Heart left ventricle (tissue), 16 donors: ENCODE measurements at regions of chr11 and their contacts with region 1.

Region 1: DNA sequence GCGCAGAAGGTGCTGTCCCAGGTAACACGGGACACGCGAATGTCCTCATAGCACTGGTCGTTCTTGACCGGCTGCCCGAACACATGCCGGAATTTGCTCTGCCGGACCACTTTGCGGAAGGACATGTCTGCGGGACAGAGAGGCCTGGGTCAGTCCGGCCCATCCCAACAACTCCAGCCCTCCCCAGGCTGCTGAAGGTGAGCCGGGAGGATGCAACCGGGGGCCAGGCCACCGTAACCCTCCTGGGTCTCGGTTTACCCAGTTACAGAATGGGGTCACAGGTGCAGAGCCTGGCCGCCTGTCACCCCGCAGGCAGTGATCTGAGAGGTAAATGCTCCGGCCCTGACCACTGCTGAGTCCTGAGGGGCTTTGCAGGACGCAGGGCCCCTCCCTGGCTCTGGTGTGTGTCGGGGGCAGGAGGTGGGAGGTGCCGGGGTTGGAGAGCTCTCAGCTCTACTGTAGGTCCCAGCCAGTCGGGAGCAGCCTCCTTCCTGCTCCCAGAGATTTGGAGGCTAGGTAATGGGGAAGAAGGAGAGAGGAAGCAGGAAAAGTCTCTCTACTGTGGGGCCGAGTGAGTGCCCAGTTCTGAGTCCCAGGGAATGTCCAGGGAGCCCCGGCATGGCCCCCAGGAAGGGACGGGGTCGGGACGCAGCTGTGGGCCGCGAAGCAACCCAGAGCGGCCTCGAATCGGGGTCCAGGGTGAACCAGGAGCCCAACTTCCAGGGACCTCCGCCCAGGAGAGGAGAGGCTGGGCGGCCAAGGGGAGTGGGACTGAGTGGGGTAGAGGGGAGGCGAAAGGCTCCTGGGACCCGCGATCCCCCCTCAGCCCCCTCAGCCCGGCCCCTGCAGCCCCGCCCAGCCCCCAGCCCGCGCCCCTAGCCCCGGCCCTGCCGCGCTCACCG is 521 bp downstream of the CORO1B start:
- DNase-seq: peak in 1 of 5 donors; percentile 21
- ATAC-seq: peak in 1 of 4 donors; percentile 4
- H3K4me3 ChIP-seq: peak overlapping the region; percentile 62 to 97 (median 84)
- H3K27ac ChIP-seq: peak overlapping the region; percentile 83 to 99 (median 96)
- H3K4me1 ChIP-seq: peaks cover 0 to 57% (median 20%) of the 10 kb centered on the region in 12 donors
- H3K27me3 ChIP-seq: no peaks in the 10 kb centered on the region
- CTCF ChIP-seq: no peak
- POLR2A ChIP-seq: no peak

Region 2: DNA sequence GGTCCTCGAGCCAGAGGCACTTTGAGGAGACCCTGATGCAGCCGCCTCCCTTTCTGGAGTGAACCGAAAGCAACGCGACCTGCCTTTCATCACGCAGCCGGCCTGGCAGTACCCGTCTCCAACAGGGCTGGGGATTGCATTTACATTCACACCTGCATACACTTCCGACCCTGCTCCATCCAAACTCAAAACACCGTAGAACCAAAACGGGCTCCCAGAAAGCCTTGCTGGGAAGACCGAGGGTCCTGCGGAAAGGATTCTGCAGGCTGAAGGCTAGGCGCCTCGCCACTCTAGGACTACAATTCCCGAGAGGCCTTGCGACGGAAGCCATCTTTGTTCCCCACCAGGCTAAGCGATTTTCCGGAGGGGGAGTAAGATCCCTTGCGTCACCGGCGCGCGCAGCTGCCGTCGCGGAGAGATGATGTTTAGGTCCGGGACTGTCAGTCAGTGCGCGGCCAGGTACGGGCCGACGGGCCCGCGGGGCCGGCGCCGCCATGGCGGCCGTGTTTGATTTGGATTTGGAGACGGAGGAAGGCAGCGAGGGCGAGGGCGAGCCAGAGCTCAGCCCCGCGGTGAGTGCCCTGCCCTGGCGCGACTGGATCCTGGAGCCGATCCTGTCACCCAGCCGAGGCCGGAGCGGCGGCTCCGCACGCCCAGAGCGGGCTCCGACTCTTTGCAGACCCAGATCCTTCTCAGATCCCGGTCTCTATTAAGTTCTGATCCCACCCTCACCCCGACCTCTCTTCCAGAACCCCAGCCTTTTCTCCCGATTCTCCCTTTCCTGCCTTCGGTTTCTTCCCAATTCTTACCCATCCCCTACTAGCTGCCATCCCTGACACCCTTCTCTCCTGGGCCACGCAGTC is 14.5 kb before region 1 on chr11 and contains the start of gene RPS6KB2:
- intact Hi-C with region 1: loop called in 2 of 10 experiments (anchors 1 kb)
- DNase-seq: peak; percentile 98 to 99 (median 99)
- ATAC-seq: peak; percentile 90 to 96 (median 94)
- H3K4me3 ChIP-seq: peak within 1 kb of the TSS; percentile 58 to 94 (median 80)
- H3K27ac ChIP-seq: peak within 1 kb of the TSS; percentile 76 to 96 (median 88)
- H3K4me1 ChIP-seq: peaks cover 7 to 23% (median 14%) of the 10 kb centered on the region in 12 donors
- H3K27me3 ChIP-seq: no peaks in the 10 kb centered on the region
- CTCF ChIP-seq: peak in 1 of 12 donors; percentile 15
- POLR2A ChIP-seq: peak; percentile 54 to 93
- total RNA-seq, gene RPS6KB2: 19.3 to 32.8 (median 25.2) TPM

Region 3: DNA sequence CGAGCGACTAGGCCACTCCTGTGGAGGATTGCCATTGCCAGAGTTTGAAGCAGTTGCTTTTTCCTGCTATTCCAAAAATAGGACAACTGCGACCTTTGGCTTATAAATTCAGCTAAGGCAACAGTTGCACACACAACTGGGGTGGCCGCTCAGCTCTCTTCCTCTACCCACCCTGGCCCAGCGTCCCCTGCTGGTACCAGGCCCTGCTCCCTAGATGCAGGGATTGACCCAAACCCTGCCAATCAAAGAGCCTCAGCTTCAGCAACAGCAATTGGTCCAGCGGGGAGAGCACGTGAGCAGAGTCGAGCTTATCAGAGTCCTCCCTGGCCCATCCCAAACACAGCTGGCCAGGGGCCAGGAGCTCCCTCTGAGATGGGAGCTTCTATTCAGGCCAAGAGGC is 102.5 kb after region 1 on chr11:
- intact Hi-C with region 1: no loop called
- DNase-seq: peak; percentile 65 to 87 (median 71)
- ATAC-seq: peak; percentile 86 to 93 (median 91)
- H3K4me3 ChIP-seq: no peak overlapping the region
- H3K27ac ChIP-seq: peak overlapping the region in 10 of 12 donors; percentile 0 to 83 (median 38)
- H3K4me1 ChIP-seq: peaks cover 0 to 15% (median 10%) of the 10 kb centered on the region in 12 donors
- H3K27me3 ChIP-seq: no peaks in the 10 kb centered on the region
- CTCF ChIP-seq: peak in 9 of 12 donors; percentile 12 to 57 (median 31)
- POLR2A ChIP-seq: no peak